ENCODE measurements at regions of chr12 and their contacts with region 1.

Region 1: GRCh38 chr12:614411-614970 is 48.8 kb downstream of the NINJ2 start:
- DNase-seq: peak; percentile 72
- H3K4me3 Mint-ChIP-seq: no peak overlapping the region
- H3K27ac Mint-ChIP-seq: no peak overlapping the region
- H3K4me1 Mint-ChIP-seq: peaks cover 30% of the 10 kb centered on the region
- H3K27me3 Mint-ChIP-seq: no peaks in the 10 kb centered on the region

Region 2: GRCh38 chr12:575948-576612 is 38.4 kb before region 1 on chr12:
- CTCF ChIA-PET with region 1: interaction called, 10 read pairs
- intact Hi-C with region 1: loop called (anchors 2 kb)
- DNase-seq: peak; percentile 80
- H3K4me3 Mint-ChIP-seq: peak overlapping the region; percentile 14
- H3K27ac Mint-ChIP-seq: no peak overlapping the region
- H3K4me1 Mint-ChIP-seq: peaks cover 29% of the 10 kb centered on the region
- H3K27me3 Mint-ChIP-seq: no peaks in the 10 kb centered on the region